ENCODE measurements at regions of chr1 and their contacts with region 1.

Region 1: DNA sequence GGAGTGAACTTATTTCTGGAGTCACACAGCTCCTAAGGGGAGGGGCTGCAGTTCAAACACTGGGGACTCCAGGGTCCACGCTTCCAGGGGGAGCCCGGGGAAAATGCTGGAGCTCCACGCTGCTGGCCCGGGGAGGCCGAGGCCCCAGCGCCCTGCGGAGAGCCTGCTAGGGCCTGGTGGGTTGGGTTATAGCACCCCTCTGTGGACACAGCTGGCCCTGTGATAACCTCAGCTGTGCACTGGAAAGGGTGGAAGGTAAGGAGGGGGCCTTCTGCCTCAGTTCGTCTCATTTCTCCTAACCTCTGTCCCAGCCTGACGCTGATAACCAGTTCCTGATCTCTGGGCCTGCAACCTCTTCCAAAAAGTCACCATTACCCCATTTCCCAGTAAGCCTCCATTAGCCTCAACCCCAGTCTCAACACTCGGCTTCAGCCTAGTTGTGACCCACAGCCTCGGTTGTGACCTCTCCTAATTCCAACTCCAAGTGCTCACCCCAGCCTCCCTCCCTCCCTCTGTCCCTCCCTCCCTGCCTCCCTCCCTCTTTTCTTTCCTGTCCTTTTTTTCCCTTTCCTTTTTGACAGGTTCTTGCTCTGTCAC is 7.1 kb downstream of the NBL1 start:
- DNase-seq: peak; percentile 66
- ATAC-seq: peak; percentile 83 to 89

Region 2: GRCh38 chr1:19251305-19252196 is 399.7 kb before region 1 on chr1 and contains the starts of genes EMC1 and MRTO4:
- intact Hi-C with region 1: loop called in 1 of 2 experiments (anchors 10 kb)
- DNase-seq: peak; percentile 91
- ATAC-seq: peak; percentile 97 to 98
- total RNA-seq, gene EMC1: 29.9 to 32.4 TPM
- total RNA-seq, gene MRTO4: 11.8 to 21.3 TPM

Region 3: DNA sequence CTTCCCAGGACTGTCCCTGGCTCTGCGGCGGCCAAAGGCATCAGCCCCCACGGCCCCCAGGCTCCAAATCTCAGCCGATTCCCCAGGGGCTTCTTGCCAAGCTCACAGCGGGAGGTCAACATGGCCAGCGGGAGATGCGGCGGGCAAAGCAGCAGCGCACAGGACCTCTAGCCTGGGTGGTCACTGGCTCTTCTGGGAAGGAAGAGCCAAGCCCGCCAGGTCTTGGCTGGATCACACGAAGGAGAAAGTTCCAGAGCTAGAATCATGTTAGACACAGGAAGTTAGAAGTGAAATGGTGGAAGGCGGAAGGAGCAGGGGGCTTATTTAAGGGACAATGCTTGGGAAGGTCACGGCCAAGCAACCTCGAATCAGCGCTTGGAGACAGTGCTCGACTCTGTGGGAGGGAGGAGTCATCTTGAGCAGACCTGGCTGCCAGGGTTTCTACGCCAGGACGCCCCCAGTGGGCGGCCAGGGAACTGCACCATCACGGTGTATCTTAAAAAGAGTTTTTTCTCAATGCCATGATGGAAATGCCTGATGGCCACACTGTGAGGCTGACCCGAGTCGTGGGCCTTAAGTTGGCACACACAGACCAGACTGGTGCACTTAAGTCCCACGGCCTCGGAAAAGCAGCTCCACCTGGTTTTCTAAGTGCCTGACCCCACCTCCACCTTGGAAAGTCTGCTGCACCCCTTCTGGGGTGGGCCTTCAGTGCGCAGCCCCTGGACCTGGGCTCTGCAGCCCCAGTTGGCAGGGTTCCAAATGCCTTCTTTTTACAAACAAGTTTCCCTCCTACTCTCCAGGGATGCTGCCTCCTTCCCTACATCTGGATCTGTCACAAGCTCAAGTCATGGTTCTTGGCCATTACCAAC is 309.8 kb before region 1 on chr1:
- intact Hi-C with region 1: loop called (anchors 2 to 5 kb)
- DNase-seq: peak; percentile 74
- ATAC-seq: peak; percentile 42 to 64

Region 4: DNA sequence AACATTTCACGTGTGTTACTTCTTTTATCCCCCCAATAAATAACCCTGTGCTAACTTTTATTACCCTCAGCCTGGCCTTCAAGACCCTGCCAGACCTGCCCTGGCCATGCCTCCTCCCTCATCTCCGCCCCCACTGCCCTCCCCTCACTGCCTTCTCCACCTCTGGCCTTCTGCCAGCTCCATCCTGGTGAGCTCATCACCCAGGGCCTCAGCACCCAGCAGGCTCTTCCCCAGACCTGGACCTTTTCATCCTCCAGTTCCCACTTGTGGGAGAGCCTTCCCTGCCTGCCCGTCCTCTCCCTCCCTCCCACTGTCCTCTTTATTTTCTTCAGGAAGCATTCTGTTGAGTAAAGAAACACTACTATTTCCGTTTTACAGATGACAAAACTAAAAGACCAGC is 267.1 kb before region 1 on chr1:
- intact Hi-C with region 1: loop called in 1 of 2 experiments (anchors 10 kb)
- DNase-seq: peak; percentile 67
- ATAC-seq: peak in 1 of 2 donors; percentile 63

Region 5: DNA sequence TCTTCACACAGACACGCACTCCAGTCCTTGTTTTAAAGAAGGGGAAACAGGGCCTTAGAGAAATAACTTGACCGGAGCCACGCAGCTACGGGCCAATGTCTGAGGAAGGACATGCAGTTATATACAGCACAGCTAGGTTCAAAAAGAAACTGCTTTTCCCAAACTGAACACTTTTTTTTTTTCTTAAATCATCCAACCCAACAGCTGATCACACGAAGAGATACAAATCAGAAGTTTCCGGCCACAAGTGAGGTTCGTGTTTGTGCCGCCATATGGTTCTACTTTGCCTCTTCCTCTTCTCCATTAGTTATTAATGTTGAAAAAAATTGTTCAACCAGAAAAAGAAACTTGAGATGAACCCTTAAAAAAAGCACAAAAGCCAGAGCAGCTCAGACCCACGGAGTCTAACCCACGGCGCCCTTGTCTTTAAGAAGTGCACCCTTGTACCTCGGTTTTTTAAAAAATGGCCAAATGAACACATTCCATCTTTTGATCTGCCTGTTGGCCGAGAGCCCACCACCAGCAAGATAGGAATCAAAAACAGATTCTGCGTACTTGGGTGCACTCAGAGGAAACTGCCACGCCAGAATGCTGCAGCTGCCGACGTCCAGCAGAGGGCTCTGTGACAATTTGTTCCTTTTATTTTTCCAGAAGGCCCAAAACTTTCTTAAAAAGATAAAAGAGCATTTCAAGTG is 260.2 kb before region 1 on chr1:
- intact Hi-C with region 1: loop called (anchors 5 to 10 kb)
- DNase-seq: peak; percentile 54
- ATAC-seq: peak; percentile 40 to 51

Region 6: GRCh38 chr1:19485362-19486187 is 165.7 kb before region 1 on chr1 and contains the start of gene CAPZB:
- intact Hi-C with region 1: loop called (anchors 5 to 10 kb)
- DNase-seq: peak; percentile 97
- ATAC-seq: peak; percentile 92 to 94
- total RNA-seq, gene CAPZB: 227 to 254 TPM

Region 7: DNA sequence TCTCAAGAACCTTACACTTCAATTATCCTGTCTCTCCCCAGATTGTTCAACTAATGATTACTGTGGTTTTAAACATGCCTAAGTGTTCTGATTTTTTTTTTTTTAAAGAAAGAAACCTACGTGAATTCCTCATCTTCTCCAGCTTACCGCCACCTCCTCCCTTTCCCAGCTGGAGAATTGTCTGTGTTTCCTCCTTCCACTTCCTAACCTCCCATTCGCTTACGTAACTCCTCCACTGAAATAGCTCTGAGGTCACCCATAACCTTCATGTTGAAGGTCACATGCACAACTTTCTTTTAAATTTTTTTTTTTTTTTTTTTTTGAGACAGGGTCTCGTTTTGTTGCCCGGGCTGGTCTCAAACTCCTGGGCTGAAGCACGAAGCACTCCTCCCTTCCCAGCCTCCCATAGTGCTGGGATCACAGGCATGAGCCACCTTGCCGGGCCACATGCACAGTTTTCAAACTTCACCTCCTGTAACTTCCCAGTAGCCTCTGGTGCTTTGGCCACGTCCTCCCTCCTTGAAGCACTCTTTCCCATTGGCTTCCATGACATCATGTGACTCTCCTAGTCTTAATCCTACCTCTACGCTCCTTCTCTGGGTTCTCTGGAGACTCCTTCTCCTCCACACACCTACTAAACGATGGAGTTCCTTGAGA is 156.1 kb before region 1 on chr1:
- intact Hi-C with region 1: loop called in 1 of 2 experiments (anchors 5 kb)
- DNase-seq: no peak
- ATAC-seq: peak; percentile 67 to 78

Measured in left cardiac atrium (tissue), 4 donors.